ENCODE measurements at regions of chr5 and their contacts with region 1.

Region 1: GRCh38 chr5:35926389-35927051 is 11.9 kb downstream of the CAPSL start:
- DNase-seq: peak; percentile 83
- H3K4me3 Mint-ChIP-seq: peak overlapping the region; percentile 16
- H3K27ac Mint-ChIP-seq: no peak overlapping the region
- H3K4me1 Mint-ChIP-seq: peaks cover 46% of the 10 kb centered on the region
- H3K27me3 Mint-ChIP-seq: peaks cover 1% of the 10 kb centered on the region

Region 2: DNA sequence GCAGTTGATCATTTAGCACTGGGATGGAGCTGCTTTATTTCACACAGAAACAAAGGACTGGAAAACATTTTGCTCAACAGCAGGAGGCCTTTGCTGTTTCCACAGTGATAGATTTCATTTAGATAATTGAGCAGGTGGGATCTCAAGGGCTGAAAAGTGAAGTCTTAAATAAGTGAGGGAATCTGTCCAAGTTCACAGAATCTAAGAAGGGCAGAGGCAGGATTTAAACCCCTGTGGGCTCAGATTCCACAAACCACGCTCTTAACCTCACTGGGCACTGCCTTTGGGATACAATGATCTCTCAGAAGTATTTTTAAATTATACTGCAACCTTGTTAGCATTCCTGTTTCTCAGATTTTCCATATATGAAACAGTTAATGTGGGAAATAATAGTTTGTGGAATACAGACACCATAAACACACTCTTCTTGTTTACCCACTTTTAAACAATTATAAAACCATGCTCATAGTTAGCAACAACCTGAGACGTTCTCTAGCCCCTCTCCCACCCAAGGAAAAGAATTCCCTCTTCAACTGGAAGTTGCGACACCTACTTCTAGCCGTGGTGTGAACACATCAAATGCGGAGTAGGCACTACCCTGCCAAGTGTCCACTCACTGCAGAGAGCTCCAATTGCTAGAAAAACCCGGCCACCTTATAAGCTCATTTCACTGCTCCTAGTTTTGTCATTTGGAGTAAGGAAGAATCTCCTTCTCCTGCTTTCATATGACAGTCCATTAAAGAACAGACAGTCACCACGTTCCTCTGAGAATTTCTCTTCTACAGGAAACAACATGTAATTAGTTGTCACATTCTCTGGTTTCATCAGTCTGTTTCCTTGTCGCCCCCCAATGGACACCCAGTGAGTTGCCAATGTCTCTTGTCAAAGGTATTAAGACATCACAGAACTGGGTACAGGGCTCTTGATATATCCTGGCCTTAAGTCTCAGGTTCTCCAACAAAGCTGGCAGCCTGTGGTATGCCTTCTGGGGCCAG is 743.7 kb before region 1 on chr5:
- CTCF ChIA-PET with region 1: interaction called, 7 read pairs
- intact Hi-C with region 1: loop called (anchors 5 kb)
- DNase-seq: peak; percentile 68
- H3K4me3 Mint-ChIP-seq: no peak overlapping the region
- H3K27ac Mint-ChIP-seq: no peak overlapping the region
- H3K4me1 Mint-ChIP-seq: no peaks in the 10 kb centered on the region
- H3K27me3 Mint-ChIP-seq: peaks cover 10% of the 10 kb centered on the region

Region 3: GRCh38 chr5:35478856-35479682 is 447.5 kb before region 1 on chr5:
- CTCF ChIA-PET with region 1: interaction called, 4 read pairs
- intact Hi-C with region 1: loop called (anchors 2 kb)
- DNase-seq: no peak
- H3K4me3 Mint-ChIP-seq: peak overlapping the region; percentile 51
- H3K27ac Mint-ChIP-seq: peak overlapping the region; percentile 81
- H3K4me1 Mint-ChIP-seq: peaks cover 9% of the 10 kb centered on the region
- H3K27me3 Mint-ChIP-seq: no peaks in the 10 kb centered on the region

Region 4: DNA sequence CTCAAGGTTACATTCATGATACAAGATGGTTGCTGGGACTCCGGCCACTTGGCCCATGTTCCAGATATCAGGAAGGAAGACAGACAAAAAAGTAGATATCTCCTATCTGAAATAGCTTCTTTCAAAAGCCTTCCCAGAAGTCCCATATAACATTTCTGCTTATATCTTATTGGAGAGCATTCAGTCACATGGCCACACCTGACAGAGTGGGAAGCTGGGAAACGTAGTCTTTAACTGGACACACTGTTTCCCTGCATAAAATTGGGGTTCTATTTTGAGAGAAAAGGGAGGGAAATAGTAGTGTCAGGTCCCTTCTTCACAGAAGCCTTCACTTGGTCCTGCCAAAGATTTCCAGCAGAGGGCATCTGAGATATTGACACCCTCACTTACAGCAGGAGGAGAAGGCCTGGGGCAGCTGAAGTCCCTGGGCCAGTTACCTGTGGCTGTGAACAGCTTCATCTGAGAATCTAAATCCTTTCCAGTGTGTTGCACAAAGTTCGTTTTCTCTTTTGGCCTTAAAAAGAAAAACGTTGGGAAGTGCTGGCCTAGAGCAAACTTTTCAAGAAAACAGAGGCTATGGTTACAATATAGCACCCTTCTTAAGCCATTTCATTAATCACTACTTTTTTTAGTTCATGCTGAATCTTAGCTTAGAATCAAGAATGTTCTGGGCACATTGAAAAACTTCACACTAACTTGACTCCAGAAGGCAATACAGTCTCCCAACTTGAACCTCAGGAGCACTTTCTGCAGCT is 275.3 kb before region 1 on chr5:
- CTCF ChIA-PET with region 1: interaction called, 146 read pairs
- intact Hi-C with region 1: loop called (anchors 1 kb)
- DNase-seq: peak; percentile 83
- H3K4me3 Mint-ChIP-seq: no peak overlapping the region
- H3K27ac Mint-ChIP-seq: no peak overlapping the region
- H3K4me1 Mint-ChIP-seq: peaks cover 9% of the 10 kb centered on the region
- H3K27me3 Mint-ChIP-seq: no peaks in the 10 kb centered on the region

Region 5: DNA sequence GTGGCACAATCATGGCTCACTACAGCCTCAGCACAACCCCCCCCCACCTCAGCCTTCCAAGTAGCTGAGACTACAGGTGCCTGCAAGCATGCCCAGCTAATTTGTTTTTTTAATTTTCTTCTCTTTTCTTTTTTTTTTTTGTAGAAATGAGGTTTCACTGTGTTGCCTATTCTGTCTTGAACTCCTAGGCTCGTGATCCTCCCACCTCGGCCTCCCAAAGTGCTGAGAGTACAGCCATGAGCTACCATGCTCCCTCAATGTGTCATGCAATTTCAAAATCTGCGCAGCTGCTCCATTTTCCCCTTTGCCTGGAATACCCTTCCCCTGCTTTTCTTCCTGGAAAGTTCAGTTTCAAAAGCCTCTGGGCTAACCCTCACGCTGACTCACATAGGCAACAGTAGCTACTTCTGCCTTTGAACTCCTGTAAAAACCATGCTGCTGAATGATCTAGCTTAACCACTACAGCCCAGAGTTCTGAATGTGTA is 140.9 kb before region 1 on chr5:
- CTCF ChIA-PET with region 1: interaction called, 109 read pairs
- intact Hi-C with region 1: no loop called
- DNase-seq: peak; percentile 76
- H3K4me3 Mint-ChIP-seq: peak overlapping the region; percentile 32
- H3K27ac Mint-ChIP-seq: peak overlapping the region; percentile 88
- H3K4me1 Mint-ChIP-seq: peaks cover 79% of the 10 kb centered on the region
- H3K27me3 Mint-ChIP-seq: no peaks in the 10 kb centered on the region

Region 6: GRCh38 chr5:35863159-35863558 is 63.4 kb before region 1 on chr5:
- CTCF ChIA-PET with region 1: interaction called, 24 read pairs
- intact Hi-C with region 1: no loop called
- DNase-seq: peak; percentile 50
- H3K4me3 Mint-ChIP-seq: peak overlapping the region; percentile 81
- H3K27ac Mint-ChIP-seq: peak overlapping the region; percentile 100
- H3K4me1 Mint-ChIP-seq: peaks cover 71% of the 10 kb centered on the region
- H3K27me3 Mint-ChIP-seq: no peaks in the 10 kb centered on the region

Region 7: DNA sequence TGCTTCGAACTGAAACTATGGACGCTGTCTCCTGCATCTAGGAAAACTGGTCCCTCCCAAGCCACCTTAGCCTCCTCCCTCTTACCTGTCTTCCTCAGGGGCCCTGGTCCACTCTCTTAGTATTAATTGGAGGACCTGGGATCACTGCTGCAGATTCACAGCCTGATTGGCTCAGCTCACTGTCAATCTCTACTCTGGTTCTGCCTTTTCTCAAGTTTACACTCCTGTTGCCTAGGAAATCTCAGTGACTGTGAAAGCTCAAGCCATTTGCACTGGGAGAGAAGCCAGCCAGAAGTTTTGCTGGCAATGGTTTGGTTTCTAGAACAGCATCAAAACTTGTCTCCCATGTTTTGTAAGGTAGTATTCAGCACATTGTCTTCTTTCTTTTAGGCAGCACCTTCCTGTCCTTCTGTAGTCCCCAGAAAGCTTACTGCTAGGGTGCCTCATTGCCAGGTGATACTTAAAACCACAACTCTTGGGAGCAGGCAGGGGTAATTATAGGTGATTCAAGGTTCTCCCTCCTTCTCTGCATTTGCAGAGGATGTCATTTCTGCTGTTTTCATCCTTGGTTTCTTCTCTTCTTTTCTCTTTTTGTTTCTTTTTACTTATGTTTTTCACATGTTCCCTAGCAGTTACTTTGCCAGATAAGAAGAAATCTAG is 12.2 kb after region 1 on chr5 and contains the start of gene CAPSL:
- CTCF ChIA-PET with region 1: interaction called, 14 read pairs
- intact Hi-C with region 1: no loop called
- DNase-seq: peak; percentile 29
- H3K4me3 Mint-ChIP-seq: no peak within 1 kb of the TSS
- H3K27ac Mint-ChIP-seq: no peak within 1 kb of the TSS
- H3K4me1 Mint-ChIP-seq: no peaks in the 10 kb centered on the region
- H3K27me3 Mint-ChIP-seq: peaks cover 6% of the 10 kb centered on the region
- total RNA-seq, gene CAPSL: 1.8 TPM

Measured in activated naive CD4-positive, alpha-beta T cell treated with anti-CD3 and anti-CD28 coated beads for 36 hours (primary cell).